ENCODE measurements at regions of chr3 and their contacts with region 1.

Region 1: GRCh38 chr3:20039766-20040475 is at the start of gene KAT2B:
- DNase-seq: peak; percentile 89
- ATAC-seq: peak; percentile 81
- total RNA-seq, gene KAT2B: 69.9 TPM

Region 2: GRCh38 chr3:19946832-19947548 is 92.9 kb before region 1 on chr3 and contains the start of gene RAB5A:
- intact Hi-C with region 1: loop called (anchors 5 kb)
- DNase-seq: peak; percentile 98
- ATAC-seq: peak; percentile 99
- total RNA-seq, gene RAB5A: 66.9 TPM

Region 3: DNA sequence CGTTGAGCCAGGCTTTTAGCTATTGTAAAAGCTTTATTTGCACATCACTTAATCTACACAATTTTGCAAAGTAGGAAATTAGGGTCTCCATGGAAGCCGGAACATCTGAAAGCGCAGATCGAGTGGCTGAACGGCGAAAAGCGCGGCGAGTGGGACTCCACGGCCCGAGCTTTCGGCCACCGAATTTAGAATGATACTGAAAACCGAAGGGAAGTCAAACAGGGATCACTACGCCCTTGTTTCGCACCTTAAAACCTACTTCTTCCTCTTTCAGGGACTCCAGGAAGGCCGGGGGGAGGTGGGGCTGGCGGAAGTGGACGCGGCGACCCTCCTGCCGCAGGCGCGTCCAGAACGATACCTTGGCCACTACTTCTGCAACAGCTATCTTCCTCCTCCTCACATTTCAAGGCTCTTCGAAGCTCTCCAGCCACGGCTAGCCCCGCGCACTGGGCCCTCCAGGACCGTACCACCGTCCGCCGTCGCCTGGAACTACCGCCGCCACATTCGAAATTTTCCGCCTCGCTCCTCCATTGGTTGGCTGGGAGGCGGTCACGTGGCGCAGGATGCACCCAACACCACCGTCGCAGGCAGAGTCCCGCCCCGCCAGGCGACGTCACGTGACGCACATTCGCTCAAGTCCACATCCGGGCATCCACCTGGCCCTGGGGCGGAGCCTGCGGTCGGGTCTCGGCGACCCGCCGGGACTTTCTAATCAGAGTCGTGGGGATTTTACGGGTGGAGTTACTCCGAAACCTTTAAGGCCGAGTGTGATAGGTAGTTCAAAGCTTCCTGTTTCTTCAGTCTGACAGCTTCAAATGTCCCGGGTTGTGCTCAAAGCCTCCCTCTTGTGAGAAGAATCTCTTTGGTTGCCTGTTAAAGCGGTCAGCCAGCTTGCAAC is 146.0 kb after region 1 on chr3 and contains the start of gene SGO1:
- intact Hi-C with region 1: loop called (anchors 10 kb)
- DNase-seq: peak; percentile 99
- ATAC-seq: peak; percentile 100
- total RNA-seq, gene SGO1: 0.31 TPM

Measured in sciatic nerve (tissue), 2 donors.